ENCODE measurements at regions of chr14 and their contacts with region 1.

Region 1: GRCh38 chr14:99518441-99519346 is 37.5 kb downstream of the CCNK start:
- DNase-seq: peak in 1 of 2 experiments; percentile 97
- H3K4me3 ChIP-seq: no peak overlapping the region
- H3K27ac ChIP-seq: no peak overlapping the region
- H3K4me1 ChIP-seq: peaks cover 5 to 19% (median 13%) of the 10 kb centered on the region in 4 experiments
- H3K27me3 ChIP-seq: no peaks in the 10 kb centered on the region
- CTCF ChIP-seq: peak in 2 of 3 experiments; percentile 96; a peak in 3 of 4 replicates
- EP300 ChIP-seq: no peak
- POLR2A ChIP-seq: no peak
- RAD21 ChIP-seq: peak; percentile 97 to 98

Region 2: GRCh38 chr14:99502989-99503421 is 15.7 kb before region 1 on chr14:
- CTCF ChIA-PET with region 1: interaction called, 17 read pairs
- POLR2A ChIA-PET with region 1: no interaction called
- DNase-seq: peak in 1 of 2 experiments; percentile 72
- H3K4me3 ChIP-seq: no peak overlapping the region; a peak in 1 of 8 replicates
- H3K27ac ChIP-seq: peak overlapping the region; percentile 55
- H3K4me1 ChIP-seq: peaks cover 0 to 13% (median 4%) of the 10 kb centered on the region in 4 experiments; a peak in 5 of 7 replicates
- H3K27me3 ChIP-seq: no peaks in the 10 kb centered on the region
- CTCF ChIP-seq: peak; percentile 33 to 52 (median 42)
- EP300 ChIP-seq: no peak
- POLR2A ChIP-seq: no peak
- RAD21 ChIP-seq: peak in 1 of 2 experiments; percentile 39; a peak in 2 of 4 replicates

Region 3: DNA sequence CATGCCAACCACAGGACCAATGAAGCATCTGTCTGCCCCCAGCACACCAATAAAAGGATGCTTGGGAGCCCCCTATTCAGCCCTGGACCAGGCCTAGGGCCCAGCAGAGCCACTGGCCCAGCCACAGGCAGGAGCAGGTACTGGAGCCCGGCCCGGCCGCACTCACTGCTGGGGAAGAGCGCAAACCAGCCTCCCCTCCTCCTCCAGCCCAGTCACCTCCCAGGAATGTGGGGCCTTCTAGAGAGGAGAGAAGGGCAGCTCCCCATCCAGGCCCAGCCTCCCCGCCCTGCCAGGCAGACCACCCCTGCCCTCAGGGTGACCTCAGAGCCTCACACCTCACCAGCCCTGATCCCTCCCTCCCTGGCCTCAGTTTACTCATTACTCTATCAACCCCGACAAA is 18.7 kb after region 1 on chr14:
- CTCF ChIA-PET with region 1: interaction called, 40 read pairs
- POLR2A ChIA-PET with region 1: interaction called, 3 read pairs
- DNase-seq: no peak
- H3K4me3 ChIP-seq: no peak overlapping the region
- H3K27ac ChIP-seq: no peak overlapping the region
- H3K4me1 ChIP-seq: peaks cover 0 to 38% (median 20%) of the 10 kb centered on the region in 4 experiments; a peak in 6 of 7 replicates
- H3K27me3 ChIP-seq: no peaks in the 10 kb centered on the region
- CTCF ChIP-seq: no peak
- EP300 ChIP-seq: no peak
- POLR2A ChIP-seq: no peak
- RAD21 ChIP-seq: no peak

Region 4: GRCh38 chr14:99604283-99604765 is 85.6 kb after region 1 on chr14:
- CTCF ChIA-PET with region 1: interaction called, 35 read pairs
- POLR2A ChIA-PET with region 1: interaction called, 5 read pairs
- DNase-seq: peak; percentile 82 to 95
- H3K4me3 ChIP-seq: peak overlapping the region; percentile 76 to 87 (median 82)
- H3K27ac ChIP-seq: no peak overlapping the region
- H3K4me1 ChIP-seq: peaks cover 4 to 28% (median 17%) of the 10 kb centered on the region in 4 experiments
- H3K27me3 ChIP-seq: peaks cover 9 to 34% (median 26%) of the 10 kb centered on the region in 4 experiments; a peak in 6 of 7 replicates
- CTCF ChIP-seq: no peak
- EP300 ChIP-seq: peak in 1 of 2 experiments; percentile 99; a peak in 2 of 3 replicates
- POLR2A ChIP-seq: no peak
- RAD21 ChIP-seq: no peak

Region 5: GRCh38 chr14:99628832-99629618 is 110.3 kb after region 1 on chr14:
- CTCF ChIA-PET with region 1: interaction called, 32 read pairs
- POLR2A ChIA-PET with region 1: interaction called, 3 read pairs
- DNase-seq: peak; percentile 43 to 89
- H3K4me3 ChIP-seq: no peak overlapping the region
- H3K27ac ChIP-seq: no peak overlapping the region
- H3K4me1 ChIP-seq: peaks cover 0 to 3% (median 1%) of the 10 kb centered on the region in 4 experiments; a peak in 4 of 7 replicates
- H3K27me3 ChIP-seq: no peaks in the 10 kb centered on the region
- CTCF ChIP-seq: peak in 2 of 3 experiments; percentile 99; a peak in 3 of 4 replicates
- EP300 ChIP-seq: no peak
- POLR2A ChIP-seq: no peak
- RAD21 ChIP-seq: peak; percentile 99

Measured in H1 (cell line).